Posterior vena cava (tissue), 2 donors: ENCODE measurements at regions of chr20 and their contacts with region 1.

Region 1: GRCh38 chr20:43863821-43864544 is 50.7 kb upstream of the TOX2 start:
- DNase-seq: no peak

Region 2: DNA sequence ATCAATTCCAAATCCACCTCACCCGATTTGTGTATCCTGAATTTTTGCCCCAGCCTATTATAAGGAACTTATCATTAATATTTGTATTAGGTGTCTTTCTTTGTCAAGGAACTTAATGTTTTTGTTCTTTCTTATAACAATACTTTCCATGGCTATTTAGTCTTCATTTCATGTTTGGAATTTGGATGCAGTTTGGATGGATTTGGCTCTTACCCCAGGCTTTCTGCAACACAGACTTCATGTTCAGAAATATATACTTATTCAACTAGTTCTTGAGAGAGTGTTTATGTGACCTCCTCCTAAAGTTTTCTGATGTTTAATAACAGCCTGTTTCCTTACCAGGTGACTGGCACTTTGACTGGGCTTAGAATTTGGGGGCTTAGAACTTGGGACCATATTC is 14.8 kb after region 1 on chr20:
- intact Hi-C with region 1: no loop called
- DNase-seq: no peak

Region 3: DNA sequence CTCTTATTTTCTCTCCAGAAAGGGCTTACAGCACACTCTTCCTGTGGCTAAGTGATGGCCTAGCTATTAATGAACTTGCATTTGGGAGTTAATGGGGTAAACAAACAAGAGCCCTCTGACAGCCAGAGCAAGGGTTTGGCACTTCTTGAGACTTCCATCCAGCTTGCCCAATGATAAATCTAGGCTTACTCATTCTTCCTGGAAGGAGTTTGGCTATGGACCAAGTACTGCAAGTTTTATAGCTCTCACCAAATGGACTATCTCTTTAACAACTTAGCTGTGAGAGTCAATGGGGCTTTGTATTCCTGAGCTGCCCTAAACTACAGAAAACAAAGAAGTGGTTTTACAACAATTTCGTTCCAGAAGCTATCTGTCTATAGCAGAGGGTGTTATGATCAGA is 1294.0 kb after region 1 on chr20:
- intact Hi-C with region 1: loop called in 1 of 2 experiments (anchors 10 kb)
- DNase-seq: no peak